GM18951 (cell line): ENCODE measurements at regions of chr12 and their contacts with region 1.

Region 1: GRCh38 chr12:17841496-17841895 is 248.5 kb downstream of the RERGL start:
- POLR2A ChIP-seq: no peak

Region 2: DNA sequence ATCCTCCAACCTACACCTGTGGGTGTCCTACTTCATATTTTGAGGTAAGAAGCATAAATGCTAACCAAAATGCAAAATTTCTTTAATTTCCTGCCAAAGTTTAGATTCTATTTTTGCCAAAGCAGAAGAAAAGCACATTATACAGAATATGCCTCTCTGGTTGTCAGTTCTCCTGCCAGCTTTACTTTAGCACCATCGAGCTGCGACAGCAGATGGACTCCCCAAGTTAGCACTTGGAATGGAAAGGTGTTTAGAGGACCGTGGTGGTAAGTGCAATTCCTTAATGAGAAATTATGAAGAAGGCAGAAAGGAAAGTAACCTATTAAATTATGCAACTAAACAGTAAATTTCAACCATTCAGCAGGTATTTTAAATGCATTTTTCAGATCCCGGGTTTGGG is 78.1 kb before region 1 on chr12:
- in situ Hi-C with region 1: loop called (anchors 10 kb)
- POLR2A ChIP-seq: no peak

Region 3: DNA sequence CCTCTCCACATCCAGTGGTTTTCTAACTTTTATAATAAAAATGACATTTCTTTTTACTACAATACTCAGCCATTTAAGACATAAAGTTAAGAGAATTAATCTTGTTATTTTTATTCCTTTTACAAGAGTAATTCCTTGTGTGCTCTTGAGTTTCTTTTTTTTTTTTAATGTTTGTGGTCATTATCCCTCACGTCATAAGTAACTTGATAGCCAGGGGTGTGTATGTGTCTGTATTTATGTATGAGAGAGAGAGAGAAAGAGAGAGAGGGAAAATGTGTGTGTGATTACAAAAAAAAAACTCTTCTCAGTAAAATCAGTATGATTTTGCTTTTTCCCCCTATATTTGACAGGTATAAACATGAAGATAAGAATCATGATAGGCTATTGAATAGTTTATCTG is 213.4 kb after region 1 on chr12:
- in situ Hi-C with region 1: no loop called
- POLR2A ChIP-seq: no peak